ENCODE measurements at regions of chr20 and their contacts with region 1.

Region 1: GRCh38 chr20:49567421-49568334 is at the start of gene PTGIS:
- DNase-seq: peak in 1 of 2 experiments; percentile 83
- H3K4me3 ChIP-seq: peak within 1 kb of the TSS; percentile 59 to 99 (median 70)
- H3K27ac ChIP-seq: peak within 1 kb of the TSS; percentile 84
- H3K4me1 ChIP-seq: peaks cover 5 to 25% (median 16%) of the 10 kb centered on the region in 4 experiments
- H3K27me3 ChIP-seq: no peaks in the 10 kb centered on the region
- CTCF ChIP-seq: no peak
- EP300 ChIP-seq: no peak
- POLR2A ChIP-seq: peak in 1 of 2 experiments; percentile 39; a peak in 2 of 3 replicates
- RAD21 ChIP-seq: no peak
- total RNA-seq, gene PTGIS: 35.5 and 40.2 TPM in 2 replicates

Region 2: GRCh38 chr20:49583669-49584417 is 16.2 kb after region 1 on chr20:
- CTCF ChIA-PET with region 1: interaction called, 6 read pairs
- POLR2A ChIA-PET with region 1: interaction called, 30 read pairs
- DNase-seq: no peak
- H3K4me3 ChIP-seq: no peak overlapping the region
- H3K27ac ChIP-seq: no peak overlapping the region
- H3K4me1 ChIP-seq: peaks cover 0 to 6% (median 3%) of the 10 kb centered on the region in 4 experiments; a peak in 5 of 7 replicates
- H3K27me3 ChIP-seq: no peaks in the 10 kb centered on the region
- CTCF ChIP-seq: no peak
- EP300 ChIP-seq: no peak
- POLR2A ChIP-seq: no peak
- RAD21 ChIP-seq: no peak

Region 3: GRCh38 chr20:49603209-49603627 is 35.5 kb after region 1 on chr20:
- CTCF ChIA-PET with region 1: interaction called, 18 read pairs
- POLR2A ChIA-PET with region 1: interaction called, 5 read pairs
- DNase-seq: no peak
- H3K4me3 ChIP-seq: no peak overlapping the region
- H3K27ac ChIP-seq: no peak overlapping the region
- H3K4me1 ChIP-seq: no peaks in the 10 kb centered on the region
- H3K27me3 ChIP-seq: no peaks in the 10 kb centered on the region
- CTCF ChIP-seq: peak; percentile 71 to 77 (median 71)
- EP300 ChIP-seq: no peak
- POLR2A ChIP-seq: no peak
- RAD21 ChIP-seq: peak; percentile 57 to 66

Measured in H1 (cell line).